HepG2 (cell line): ENCODE measurements at regions of chr14 and their contacts with region 1.

Region 1: GRCh38 chr14:67704484-67705089 is 2.9 kb downstream of the RDH12 start:
- DNase-seq: peak; percentile 54
- ATAC-seq: peak; percentile 84
- H3K4me3 ChIP-seq: no peak overlapping the region
- H3K27ac ChIP-seq: no peak overlapping the region
- H3K4me1 ChIP-seq: peaks cover 23% of the 10 kb centered on the region
- H3K27me3 ChIP-seq: no peaks in the 10 kb centered on the region
- CTCF ChIP-seq: peak; percentile 85
- EP300 ChIP-seq: no peak
- POLR2A ChIP-seq: no peak
- RAD21 ChIP-seq: peak; percentile 61; the same call in 1 of the 2 replicates

Region 2: GRCh38 chr14:67426983-67427606 is 277.5 kb before region 1 on chr14:
- CTCF ChIA-PET with region 1: interaction called, 3 read pairs
- POLR2A ChIA-PET with region 1: no interaction called
- in situ Hi-C with region 1: no loop called
- intact Hi-C with region 1: loop called (anchors 10 kb)
- DNase-seq: peak; percentile 76
- ATAC-seq: peak; percentile 82
- H3K4me3 ChIP-seq: peak overlapping the region in 1 of 3 experiments; percentile 41; a peak in 1 of 6 replicates
- H3K27ac ChIP-seq: no peak overlapping the region
- H3K4me1 ChIP-seq: peaks cover 32% of the 10 kb centered on the region
- H3K27me3 ChIP-seq: peaks cover 0 to 6% of the 10 kb centered on the region in 2 experiments; a peak in 2 of 5 replicates
- CTCF ChIP-seq: peak; percentile 91
- EP300 ChIP-seq: no peak
- POLR2A ChIP-seq: no peak
- RAD21 ChIP-seq: peak; percentile 82

Region 3: DNA sequence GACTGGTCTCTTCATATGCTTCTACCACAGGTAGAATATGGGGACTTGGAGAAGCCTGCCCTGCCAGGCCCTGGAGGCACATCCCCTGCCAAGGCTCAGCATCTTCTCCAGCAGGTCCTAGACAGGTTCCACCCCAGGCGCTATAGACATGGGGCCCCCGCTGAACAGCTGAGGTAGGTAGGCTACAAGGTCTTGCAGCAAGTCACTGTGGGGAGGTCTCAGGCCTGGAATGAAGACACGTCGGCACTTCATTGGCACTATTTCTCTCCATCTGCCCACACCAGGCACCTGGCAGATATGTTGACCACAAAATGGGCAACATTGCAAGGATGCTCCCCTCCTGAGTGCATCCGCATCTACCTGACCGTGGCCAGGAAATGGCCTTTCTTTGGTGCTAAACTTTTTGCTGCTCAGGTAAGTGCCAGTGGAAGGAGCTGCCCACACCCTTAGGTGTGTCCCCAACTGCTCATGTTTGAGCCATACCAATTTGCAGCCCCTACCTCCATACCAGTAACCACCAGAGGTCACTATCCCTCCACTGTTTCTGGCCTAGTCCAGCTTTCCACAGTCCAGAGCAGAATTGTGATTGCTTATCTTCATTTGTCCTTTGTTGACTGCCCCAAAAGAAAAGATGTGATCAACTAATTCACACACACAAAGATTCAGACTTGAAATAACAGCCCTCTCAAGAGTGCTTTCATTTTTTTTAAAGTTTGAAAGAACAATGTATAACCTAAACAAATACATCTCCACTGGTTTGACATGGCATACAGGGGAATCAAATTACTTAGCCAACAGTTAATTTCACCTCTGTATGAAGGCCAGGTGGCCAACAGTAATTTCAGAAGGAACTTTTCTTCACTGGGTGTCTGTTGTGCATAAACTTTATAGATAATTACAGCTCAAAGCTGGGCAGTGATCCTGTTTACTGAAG is 120.6 kb before region 1 on chr14:
- CTCF ChIA-PET with region 1: interaction called, 29 read pairs
- POLR2A ChIA-PET with region 1: interaction called, 4 read pairs
- in situ Hi-C with region 1: loop called (anchors 10 kb)
- intact Hi-C with region 1: loop called (anchors 1 kb)
- DNase-seq: peak; percentile 58
- ATAC-seq: peak; percentile 94
- H3K4me3 ChIP-seq: no peak overlapping the region
- H3K27ac ChIP-seq: no peak overlapping the region
- H3K4me1 ChIP-seq: peaks cover 9% of the 10 kb centered on the region
- H3K27me3 ChIP-seq: no peaks in the 10 kb centered on the region
- CTCF ChIP-seq: peak; percentile 88
- EP300 ChIP-seq: no peak
- POLR2A ChIP-seq: no peak
- RAD21 ChIP-seq: peak; percentile 80

Region 4: DNA sequence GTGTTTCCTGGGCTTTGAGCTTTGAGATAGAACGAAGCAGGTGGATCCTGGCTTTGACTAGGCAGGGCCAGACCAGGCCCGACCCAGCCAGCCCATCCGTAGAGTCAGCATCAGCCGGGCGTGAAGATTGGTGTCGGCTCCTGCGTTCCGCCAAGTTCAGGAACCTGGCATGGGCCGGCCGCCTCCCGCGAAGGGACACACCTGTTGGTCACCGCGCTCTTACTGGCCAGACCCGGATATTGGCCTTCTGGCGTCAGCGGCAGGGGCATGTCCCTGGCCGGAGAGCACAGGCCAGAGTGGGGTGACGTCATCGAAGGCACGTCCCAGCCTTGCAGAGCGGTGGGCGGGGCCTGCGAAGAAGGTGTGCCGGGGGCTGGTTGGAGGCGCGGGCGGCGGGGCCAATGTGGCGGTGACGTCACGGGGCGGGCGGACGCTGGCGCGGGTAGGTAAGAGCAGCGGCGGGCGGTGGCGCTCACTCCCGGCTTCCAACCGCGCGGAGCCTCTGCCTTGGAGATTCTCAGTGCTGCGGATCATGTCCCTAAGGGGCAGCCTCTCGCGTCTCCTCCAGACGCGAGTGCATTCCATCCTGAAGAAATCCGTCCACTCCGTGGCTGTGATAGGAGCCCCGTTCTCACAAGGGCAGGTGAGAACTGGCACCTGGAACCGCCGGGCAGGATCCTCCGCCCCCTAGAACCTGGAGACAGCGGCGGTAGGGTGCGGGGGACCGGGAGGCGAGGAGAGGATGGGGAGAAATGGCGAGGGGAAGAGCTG is 85.0 kb before region 1 on chr14 and contains the start of gene ARG2:
- CTCF ChIA-PET with region 1: interaction called, 19 read pairs
- POLR2A ChIA-PET with region 1: interaction called, 6 read pairs
- in situ Hi-C with region 1: loop called (anchors 10 kb)
- intact Hi-C with region 1: loop called (anchors 2 kb)
- DNase-seq: peak; percentile 95
- ATAC-seq: peak; percentile 94
- H3K4me3 ChIP-seq: peak within 1 kb of the TSS; percentile 81 to 95 (median 88)
- H3K27ac ChIP-seq: peak within 1 kb of the TSS; percentile 61
- H3K4me1 ChIP-seq: peaks cover 51% of the 10 kb centered on the region
- H3K27me3 ChIP-seq: 0 out of 5 replicates have a peak, but pooled peaks cover 0 to 5% of the 10 kb centered on the region in 2 experiments
- CTCF ChIP-seq: peak; percentile 66
- EP300 ChIP-seq: no peak
- POLR2A ChIP-seq: peak; percentile 86 to 89
- RAD21 ChIP-seq: no peak
- total RNA-seq, gene ARG2: 37.5 and 59.7 TPM in 2 replicates

Region 5: DNA sequence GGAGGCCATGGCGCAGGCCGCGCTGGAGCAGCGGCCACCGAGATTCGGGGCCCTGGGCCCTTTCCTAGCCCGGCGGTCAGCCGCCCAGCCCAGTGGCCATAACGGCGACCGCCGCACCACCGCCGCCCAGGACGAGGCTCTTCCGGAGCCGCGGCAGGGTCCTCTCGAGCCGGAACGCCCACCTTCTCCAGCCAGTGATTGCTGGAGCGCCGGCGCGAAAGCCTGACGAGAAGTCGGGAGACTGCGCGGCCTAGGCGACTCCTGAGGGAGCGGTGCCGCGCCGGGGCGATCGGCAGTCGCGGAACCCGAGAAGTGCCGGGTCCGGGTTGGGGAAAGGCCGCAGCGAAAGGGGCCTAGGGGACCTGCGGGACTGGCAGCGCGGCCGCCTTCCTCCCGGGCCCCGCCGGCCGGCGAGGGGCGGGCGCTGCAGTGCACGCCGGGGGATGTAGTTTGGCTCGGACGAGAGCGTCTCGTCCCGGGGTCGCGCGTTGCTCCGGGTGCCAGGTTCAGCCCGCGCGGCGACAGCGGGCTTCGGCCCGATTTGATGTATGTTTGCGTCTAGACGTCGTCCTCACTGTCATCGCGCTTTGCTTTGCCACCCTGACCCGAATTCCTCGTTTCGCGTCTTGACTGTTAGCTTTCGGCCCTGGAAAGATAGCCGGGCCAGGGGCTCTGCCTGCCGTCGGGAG is 30.0 kb before region 1 on chr14 and contains the start of gene VTI1B:
- CTCF ChIA-PET with region 1: interaction called, 7 read pairs
- POLR2A ChIA-PET with region 1: interaction called, 4 read pairs
- in situ Hi-C with region 1: loop called (anchors 5 kb)
- intact Hi-C with region 1: loop called (anchors 2 kb)
- DNase-seq: peak; percentile 65
- ATAC-seq: peak; percentile 95
- H3K4me3 ChIP-seq: peak within 1 kb of the TSS; percentile 89 to 100 (median 95)
- H3K27ac ChIP-seq: peak within 1 kb of the TSS; percentile 98
- H3K4me1 ChIP-seq: peaks cover 20% of the 10 kb centered on the region
- H3K27me3 ChIP-seq: no peaks in the 10 kb centered on the region; a peak in 1 of 5 replicates
- CTCF ChIP-seq: peak; percentile 64
- EP300 ChIP-seq: no peak
- POLR2A ChIP-seq: peak; percentile 57 to 73
- RAD21 ChIP-seq: no peak; the same call in 1 of the 2 replicates
- total RNA-seq, gene VTI1B: 93.4 and 103 TPM in 2 replicates